Right ventricle myocardium superior (tissue), 1 donor: ENCODE measurements at regions of chr9 and their contacts with region 1.

Region 1: DNA sequence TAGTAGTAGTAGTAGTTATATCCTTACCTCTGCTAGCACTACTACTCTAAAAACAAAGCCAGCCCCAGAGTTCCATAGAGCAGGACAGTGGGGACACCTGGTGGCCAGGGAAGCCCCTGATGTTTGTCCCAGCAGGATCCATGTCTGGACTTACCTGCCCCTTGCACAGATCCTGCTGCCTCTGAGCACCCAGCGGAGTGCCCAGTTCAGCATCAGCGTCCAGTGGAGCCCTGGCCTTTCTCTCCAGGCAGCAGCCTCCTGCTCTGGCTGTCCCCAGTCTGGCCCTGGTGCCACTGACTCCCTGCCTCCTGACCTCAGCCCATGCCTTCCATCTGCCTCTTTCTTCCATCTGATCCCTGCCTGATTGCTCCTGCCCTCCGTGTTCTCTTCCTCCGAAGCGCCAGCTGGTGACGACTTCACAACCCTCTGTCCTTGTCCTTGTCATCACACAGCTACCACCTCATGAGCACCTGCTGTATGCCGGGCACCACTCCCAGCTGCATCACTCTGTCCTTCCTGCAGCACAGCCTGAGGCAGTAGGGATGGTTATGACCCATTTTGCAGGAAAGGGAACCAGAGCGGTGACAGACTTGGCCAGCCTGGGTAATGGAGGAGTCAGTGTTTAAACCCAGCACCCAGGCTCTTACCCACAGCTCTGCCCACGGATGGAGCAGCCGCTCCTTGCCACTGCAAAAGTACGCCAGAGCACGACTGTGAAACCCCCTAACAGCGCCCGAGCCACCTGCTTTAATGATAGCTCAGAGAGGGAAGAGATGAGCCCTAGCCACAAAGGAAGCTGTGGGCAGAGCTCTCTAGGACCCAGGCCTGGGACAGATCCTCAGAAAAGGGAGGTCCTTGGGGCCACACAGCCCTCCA is 11.5 kb downstream of the SARDH start:
- DNase-seq: peak; percentile 79
- ATAC-seq: peak; percentile 87

Region 2: DNA sequence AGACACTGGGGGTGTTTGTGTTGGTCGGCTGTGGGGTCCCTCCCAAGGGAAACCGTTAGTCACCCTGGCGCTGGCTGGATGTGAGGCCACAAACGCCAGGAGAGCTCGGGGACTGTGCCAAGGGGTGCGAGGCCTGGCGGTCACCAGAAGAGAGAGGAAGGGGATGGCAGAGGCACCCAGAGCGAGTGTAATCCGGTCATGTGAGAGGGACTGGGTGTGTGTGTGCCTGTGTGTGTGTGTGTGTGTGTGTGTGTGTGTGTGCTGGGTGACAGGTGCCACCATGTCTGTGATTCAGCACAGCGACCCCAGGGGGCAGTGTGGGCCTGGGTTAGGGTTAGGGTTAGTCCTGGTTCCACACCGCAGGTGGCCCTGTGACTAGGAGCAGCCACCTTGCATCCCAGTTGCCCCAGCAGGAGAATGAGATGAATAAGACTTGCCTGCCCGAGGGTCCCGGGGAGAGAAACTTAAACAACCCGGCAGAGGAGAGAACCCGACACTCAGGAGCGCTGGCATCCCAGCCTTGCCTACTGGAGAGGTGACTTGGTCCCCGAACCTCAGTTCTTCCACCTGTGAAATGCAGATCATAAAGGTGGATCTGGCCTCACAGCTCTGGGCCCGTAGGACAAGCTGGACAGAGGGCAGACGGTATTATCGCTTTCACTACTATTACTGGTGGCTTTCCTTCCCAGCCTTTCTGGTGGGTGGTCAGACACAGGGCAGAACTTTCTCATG is 193.5 kb before region 1 on chr9:
- intact Hi-C with region 1: loop called (anchors 5 kb)
- DNase-seq: peak; percentile 82
- ATAC-seq: peak; percentile 60